Vagina (tissue), 2 donors: ENCODE measurements at regions of chr20 and their contacts with region 1.

Region 1: GRCh38 chr20:21505161-21505809 is 8.6 kb downstream of the NKX2-2 start:
- DNase-seq: no peak
- H3K4me3 ChIP-seq: peak overlapping the region in 1 of 2 donors; percentile 17
- H3K27ac ChIP-seq: no peak overlapping the region
- H3K4me1 ChIP-seq: peaks cover 20% of the 10 kb centered on the region
- H3K27me3 ChIP-seq: peaks cover 8% of the 10 kb centered on the region
- CTCF ChIP-seq: peak; percentile 77 to 98 (median 90)
- POLR2A ChIP-seq: no peak

Region 2: DNA sequence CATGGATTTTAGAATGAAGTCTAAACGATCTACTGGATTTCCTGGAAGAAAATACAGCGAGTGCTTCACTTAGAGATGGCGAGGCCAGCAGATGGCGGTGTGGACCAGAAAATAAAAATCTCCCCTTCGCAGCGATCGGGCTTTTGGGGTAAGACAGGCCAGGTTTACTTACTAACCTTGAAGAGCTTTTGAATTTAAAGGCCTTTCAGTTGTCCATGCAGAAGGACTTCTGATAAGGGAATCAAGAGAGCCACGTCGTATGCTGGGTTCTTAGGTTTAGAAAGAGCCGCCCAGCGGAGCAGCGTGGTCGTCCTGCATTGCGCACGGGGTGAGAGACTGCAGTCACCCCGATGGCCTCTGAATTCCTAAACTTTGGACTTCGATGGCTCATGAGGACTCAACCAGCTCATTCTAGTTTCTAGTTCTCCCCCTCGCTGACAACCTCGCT is 667.7 kb before region 1 on chr20:
- intact Hi-C with region 1: loop called (anchors 10 kb)
- DNase-seq: no peak
- H3K4me3 ChIP-seq: no peak overlapping the region
- H3K27ac ChIP-seq: no peak overlapping the region
- H3K4me1 ChIP-seq: no peaks in the 10 kb centered on the region
- H3K27me3 ChIP-seq: no peaks in the 10 kb centered on the region
- CTCF ChIP-seq: peak; percentile 4 to 65 (median 52)
- POLR2A ChIP-seq: no peak

Region 3: DNA sequence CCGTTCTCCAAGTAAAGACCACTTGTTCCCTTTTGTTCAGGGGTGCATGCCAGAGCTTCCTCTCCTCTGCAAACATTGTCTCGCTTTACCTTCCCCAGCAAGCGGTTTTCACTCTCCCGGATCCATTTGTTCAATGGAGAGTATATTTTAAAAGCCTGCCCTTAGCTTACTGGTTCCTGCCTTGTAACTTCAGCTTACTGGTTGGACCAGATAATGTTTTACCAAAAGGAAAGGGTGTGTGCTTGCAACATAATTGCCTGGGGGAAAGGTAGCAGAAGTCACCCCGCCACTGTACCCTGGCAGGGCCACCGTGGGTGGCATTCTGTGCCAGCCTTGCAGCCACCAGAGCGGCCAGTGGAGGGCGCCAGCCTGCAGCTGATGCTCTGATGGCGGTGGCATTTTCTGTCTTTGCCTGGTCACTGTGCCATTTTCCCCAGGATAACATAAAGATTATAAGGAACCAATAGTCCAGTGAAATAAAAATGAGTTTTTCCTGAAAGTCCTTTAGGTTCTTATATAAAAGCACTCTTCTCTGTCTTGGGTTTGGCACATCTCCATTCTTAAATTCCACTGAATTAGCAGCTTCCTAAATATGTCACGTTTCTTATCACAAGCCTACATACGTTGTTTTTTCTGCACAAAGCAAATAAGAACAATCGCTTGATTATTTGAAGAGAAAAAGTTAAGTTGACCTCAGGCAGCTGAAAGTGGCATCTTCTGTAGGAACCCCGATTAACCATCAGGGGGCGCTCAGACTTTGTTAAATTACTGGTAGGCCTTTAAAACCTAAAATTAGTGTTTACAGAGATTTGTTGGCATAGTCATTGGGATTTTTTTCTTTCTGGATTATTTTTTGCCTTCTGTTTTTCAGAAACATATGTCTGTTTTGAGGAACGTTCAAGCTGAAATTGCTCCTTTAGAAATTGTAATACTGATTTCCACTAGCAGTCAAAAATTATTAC is 269.5 kb before region 1 on chr20:
- intact Hi-C with region 1: loop called (anchors 2 kb)
- DNase-seq: no peak
- H3K4me3 ChIP-seq: no peak overlapping the region
- H3K27ac ChIP-seq: no peak overlapping the region
- H3K4me1 ChIP-seq: no peaks in the 10 kb centered on the region
- H3K27me3 ChIP-seq: no peaks in the 10 kb centered on the region
- CTCF ChIP-seq: peak; percentile 54 to 65 (median 57)
- POLR2A ChIP-seq: no peak